ENCODE measurements at regions of chr12 and their contacts with region 1.

Region 1: DNA sequence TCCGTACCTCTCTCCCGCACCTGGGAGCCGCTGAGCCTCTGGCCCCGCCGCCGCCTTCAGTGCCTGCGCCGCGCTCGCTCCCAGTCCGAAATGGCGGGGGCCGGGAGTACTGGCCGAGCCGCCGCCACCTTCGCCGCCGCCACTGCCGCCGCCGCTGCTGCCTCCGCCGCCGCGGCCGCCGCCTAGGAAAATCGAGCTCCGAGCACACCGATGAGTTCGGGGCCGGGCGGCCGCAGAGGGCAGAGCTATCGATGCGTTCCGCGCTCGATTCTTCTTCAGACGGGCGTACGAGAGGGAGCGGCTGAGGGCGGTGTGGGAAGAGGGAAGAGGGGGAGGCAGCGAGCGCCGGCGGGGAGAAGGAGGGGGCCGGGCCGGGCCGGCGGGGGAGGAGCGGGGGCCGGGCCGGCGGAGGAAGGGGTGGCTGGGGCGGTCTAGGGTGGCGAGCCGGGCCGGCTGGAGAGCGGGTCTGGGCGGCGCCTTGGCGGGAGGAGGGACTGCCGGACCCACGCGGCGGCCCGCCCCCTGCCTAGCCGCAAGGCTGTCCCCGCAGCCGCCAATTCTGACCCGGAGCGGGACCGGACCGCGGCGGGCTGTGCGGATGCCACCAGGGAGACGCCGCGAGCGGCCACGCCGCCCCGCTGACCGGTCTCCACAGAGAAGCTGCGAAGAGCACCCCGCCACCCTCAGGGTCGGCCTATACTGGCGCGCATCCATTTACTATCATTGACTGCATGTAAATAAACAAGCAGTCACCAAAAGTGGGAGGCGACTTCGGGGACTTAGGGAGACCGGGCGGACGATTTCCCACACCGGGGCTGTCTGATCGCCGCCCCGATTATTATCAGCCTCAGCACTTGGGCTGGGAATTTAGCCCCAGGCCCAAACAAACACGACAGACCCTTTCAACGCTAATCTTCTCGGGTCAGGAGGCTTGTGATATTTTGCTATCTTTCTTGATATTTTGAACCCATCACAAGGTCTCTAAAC is at the start of gene KRAS:
- DNase-seq: peak; percentile 84 to 97 (median 92)
- H3K4me3 ChIP-seq: peak within 1 kb of the TSS; percentile 69 to 97 (median 86)
- H3K27ac ChIP-seq: peak within 1 kb of the TSS; percentile 37 to 96 (median 87)
- H3K27me3 ChIP-seq: no peaks in the 10 kb centered on the region
- CTCF ChIP-seq: peak in 36 of 56 donors; percentile 1 to 63 (median 26)
- total RNA-seq, gene KRAS: 17.4 to 48.2 (median 32.9) TPM

Region 2: GRCh38 chr12:25195056-25195971 is 55.7 kb before region 1 on chr12 and contains the starts of genes DNAI7 and ETFRF1:
- intact Hi-C with region 1: loop called (anchors 5 kb)
- DNase-seq: peak; percentile 88 to 95 (median 94)
- H3K4me3 ChIP-seq: peak within 1 kb of the TSS; percentile 52 to 97 (median 85)
- H3K27ac ChIP-seq: peak within 1 kb of the TSS; percentile 63 to 98 (median 92)
- H3K27me3 ChIP-seq: no peaks in the 10 kb centered on the region
- CTCF ChIP-seq: peak in 21 of 56 donors; percentile 2 to 42 (median 19)
- total RNA-seq, gene DNAI7: 2.2 to 10.9 (median 6.2) TPM
- total RNA-seq, gene ETFRF1: 33.4 to 70.2 (median 44.9) TPM

Region 3: GRCh38 chr12:25266497-25266896 is 15.5 kb after region 1 on chr12:
- intact Hi-C with region 1: no loop called
- DNase-seq: no peak
- H3K4me3 ChIP-seq: no peak overlapping the region
- H3K27ac ChIP-seq: no peak overlapping the region
- H3K27me3 ChIP-seq: no peaks in the 10 kb centered on the region
- CTCF ChIP-seq: no peak

Region 4: DNA sequence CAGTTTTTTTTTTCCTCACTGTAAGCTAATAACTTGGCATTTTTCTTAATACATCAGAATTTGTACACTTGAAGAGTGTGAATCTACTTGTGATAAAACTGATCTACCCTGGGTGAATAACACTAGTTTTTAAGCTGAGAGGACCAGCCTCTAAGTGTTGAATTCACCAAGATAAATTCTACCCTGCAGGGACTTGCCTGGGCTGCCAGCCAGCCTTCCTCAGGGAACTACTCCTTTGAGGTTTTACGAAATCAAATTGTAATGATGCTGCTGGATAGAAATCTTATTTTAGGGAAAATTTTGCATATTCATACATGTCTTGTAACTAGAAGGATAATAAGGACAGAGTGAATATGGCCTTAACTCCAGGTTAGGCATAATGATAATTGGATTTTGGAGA is 1773.3 kb after region 1 on chr12:
- intact Hi-C with region 1: loop called in 1 of 2 experiments (anchors 10 kb)
- DNase-seq: no peak
- H3K4me3 ChIP-seq: peak overlapping the region in 49 of 59 donors; percentile 0 to 99 (median 87)
- H3K27ac ChIP-seq: no peak overlapping the region
- H3K27me3 ChIP-seq: no peaks in the 10 kb centered on the region
- CTCF ChIP-seq: no peak